ENCODE measurements at regions of chr15 and their contacts with region 1.

Region 1: DNA sequence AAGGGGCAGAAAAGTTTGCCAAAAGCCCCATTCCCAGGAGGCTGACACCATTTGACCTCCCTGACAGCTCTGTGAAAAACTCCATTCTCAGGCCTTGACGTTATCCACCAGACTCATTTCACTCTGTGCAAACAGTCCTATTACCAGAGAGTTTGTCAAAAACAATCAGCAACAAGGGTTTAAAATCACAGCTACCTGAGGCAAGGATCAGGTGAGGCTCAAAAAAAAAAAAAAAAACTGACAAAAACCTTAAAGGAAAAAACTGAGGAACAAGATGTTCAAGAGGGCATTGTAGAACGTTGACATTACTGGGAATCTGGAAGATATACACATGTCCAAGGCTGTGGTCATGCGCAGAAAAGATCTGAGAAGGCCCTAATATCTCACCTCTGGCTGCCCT is 11.4 kb downstream of the AVEN start:
- DNase-seq: no peak
- H3K4me3 ChIP-seq: no peak overlapping the region
- H3K27ac ChIP-seq: no peak overlapping the region
- H3K4me1 ChIP-seq: no peaks in the 10 kb centered on the region
- H3K27me3 ChIP-seq: no peaks in the 10 kb centered on the region
- CTCF ChIP-seq: no peak

Region 2: DNA sequence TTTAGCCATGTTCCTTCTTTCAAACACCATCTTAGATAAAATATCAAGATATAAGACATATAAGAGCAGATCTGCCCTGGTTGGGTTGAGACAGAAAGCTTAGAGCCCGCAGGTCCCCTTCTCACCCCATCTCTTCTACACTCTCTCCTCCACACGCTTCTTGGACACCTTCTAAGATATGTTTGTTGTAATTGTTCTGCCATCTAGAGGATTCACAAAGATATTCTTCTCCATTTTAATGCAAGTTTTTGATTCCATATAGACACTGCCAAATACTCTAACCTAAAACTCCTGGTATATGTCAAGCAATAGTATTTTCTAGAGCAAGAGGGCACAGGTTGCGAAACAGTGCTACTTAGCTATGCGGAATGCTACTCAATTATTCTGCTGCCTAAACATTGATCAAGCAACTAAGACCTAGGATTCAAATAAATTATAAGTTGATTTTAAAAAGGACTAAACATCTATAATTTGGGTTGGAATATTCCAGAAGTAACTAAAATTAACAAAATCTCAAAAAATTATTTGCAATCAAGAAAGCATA is 52.5 kb before region 1 on chr15:
- intact Hi-C with region 1: no loop called
- DNase-seq: no peak
- H3K4me3 ChIP-seq: no peak overlapping the region
- H3K27ac ChIP-seq: no peak overlapping the region
- H3K4me1 ChIP-seq: peaks cover 0 to 3% (median 0%) of the 10 kb centered on the region in 4 donors
- H3K27me3 ChIP-seq: no peaks in the 10 kb centered on the region
- CTCF ChIP-seq: no peak

Region 3: DNA sequence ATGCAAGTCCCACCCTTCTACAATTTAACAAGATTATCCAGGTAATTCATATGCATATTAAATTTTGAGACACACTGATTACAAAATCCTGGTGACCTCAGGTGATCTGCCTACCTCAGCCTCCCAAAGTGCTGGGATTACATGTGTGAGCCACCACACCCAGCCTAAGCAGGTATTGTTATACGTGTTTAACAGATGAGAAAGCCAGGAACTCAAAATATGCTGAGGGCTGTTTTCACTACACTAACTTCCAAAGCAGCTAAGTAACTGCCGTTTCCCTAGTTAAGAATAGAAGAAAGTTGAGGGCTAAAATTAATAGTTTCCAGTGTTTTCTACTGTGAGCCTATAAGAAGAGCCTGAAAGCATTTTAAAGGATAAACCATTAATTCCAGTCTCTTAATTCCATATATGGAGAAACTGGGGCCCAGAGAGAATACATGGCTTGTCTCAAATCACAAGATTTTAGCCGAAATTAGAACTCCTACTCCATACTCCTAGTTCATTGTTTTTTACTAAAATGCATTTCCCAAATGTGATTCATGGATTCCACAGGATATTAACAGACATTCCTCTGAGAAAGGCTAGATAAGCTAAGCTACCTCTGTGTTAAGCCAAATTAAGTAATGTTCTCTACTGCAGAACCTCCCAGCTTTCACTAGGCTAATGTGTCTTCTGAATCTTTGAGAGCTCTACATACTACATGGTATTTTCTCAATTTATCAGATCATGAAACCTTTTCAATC is 28.4 kb after region 1 on chr15:
- intact Hi-C with region 1: loop called (anchors 2 kb)
- DNase-seq: no peak
- H3K4me3 ChIP-seq: no peak overlapping the region
- H3K27ac ChIP-seq: peak overlapping the region; percentile 65 to 75
- H3K4me1 ChIP-seq: peaks cover 0 to 23% (median 6%) of the 10 kb centered on the region in 4 donors
- H3K27me3 ChIP-seq: no peaks in the 10 kb centered on the region
- CTCF ChIP-seq: no peak

Measured in tibial artery (tissue), 4 donors.